CD8-positive, alpha-beta T cell (primary cell): ENCODE measurements at regions of chr1 and their contacts with region 1.

Region 1: GRCh38 chr1:167454894-167455785 is 63.2 kb downstream of the CD247 start:
- DNase-seq: peak; percentile 65 to 93 (median 83)
- ATAC-seq: peak; percentile 63
- H3K4me3 ChIP-seq: peak overlapping the region; percentile 56 to 89
- H3K4me3 Mint-ChIP-seq: peak overlapping the region; percentile 87
- H3K27ac ChIP-seq: peak overlapping the region; percentile 84 to 91
- H3K27ac Mint-ChIP-seq: peak overlapping the region; percentile 96
- H3K4me1 ChIP-seq: peaks cover 68% of the 10 kb centered on the region
- H3K4me1 Mint-ChIP-seq: peaks cover 74% of the 10 kb centered on the region
- H3K27me3 ChIP-seq: no peaks in the 10 kb centered on the region
- H3K27me3 Mint-ChIP-seq: no peaks in the 10 kb centered on the region
- CTCF ChIP-seq: no peak

Region 2: DNA sequence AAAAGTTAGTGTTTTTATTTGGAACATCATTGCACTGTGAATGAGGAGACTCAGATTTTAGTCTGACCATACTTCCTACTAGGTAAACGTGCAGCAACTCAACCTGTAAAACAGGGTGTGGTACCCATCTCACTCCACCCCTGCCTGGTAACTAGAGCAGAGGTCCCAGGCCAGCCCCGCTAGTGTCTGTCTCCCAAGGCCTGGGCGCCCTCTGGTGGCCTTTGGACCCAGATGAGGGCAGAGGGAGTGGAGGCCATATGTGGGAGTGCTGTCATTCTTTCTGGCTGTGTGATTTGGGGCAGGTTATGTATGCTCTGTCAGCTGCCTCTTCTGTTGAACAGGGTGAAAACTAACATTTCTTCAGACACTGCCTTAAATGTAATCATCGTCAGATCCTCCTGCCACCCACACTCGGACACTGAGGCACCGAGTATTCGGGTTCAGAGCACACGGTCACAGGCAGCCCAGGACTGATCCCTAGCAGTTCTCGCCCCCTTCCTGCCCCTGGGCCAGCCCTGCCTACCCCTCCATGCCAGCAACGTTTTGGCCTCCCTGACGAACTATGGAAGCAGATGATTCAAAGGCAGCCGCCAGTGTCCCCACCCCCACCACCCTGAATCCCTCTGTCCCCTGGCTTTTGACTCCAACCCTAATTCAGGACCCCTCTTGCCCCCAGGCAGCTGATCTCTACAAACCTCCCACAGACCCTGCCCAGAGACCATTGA is 12.9 kb before region 1 on chr1:
- CTCF ChIA-PET with region 1: interaction called, 13 read pairs
- POLR2A ChIA-PET with region 1: interaction called, 19 read pairs
- intact Hi-C with region 1: no loop called
- DNase-seq: peak; percentile 78 to 91 (median 89)
- ATAC-seq: peak; percentile 80
- H3K4me3 ChIP-seq: no peak overlapping the region
- H3K4me3 Mint-ChIP-seq: no peak overlapping the region
- H3K27ac ChIP-seq: peak overlapping the region in 1 of 2 experiments; percentile 71
- H3K27ac Mint-ChIP-seq: peak overlapping the region; percentile 85
- H3K4me1 ChIP-seq: peaks cover 81% of the 10 kb centered on the region
- H3K4me1 Mint-ChIP-seq: peaks cover 91% of the 10 kb centered on the region
- H3K27me3 ChIP-seq: no peaks in the 10 kb centered on the region
- H3K27me3 Mint-ChIP-seq: no peaks in the 10 kb centered on the region
- CTCF ChIP-seq: peak; percentile 75

Region 3: GRCh38 chr1:167474191-167474716 is 19.1 kb after region 1 on chr1:
- CTCF ChIA-PET with region 1: interaction called, 11 read pairs
- POLR2A ChIA-PET with region 1: interaction called, 3 read pairs
- intact Hi-C with region 1: loop called in 1 of 2 experiments (anchors 2 kb)
- DNase-seq: peak in 6 of 9 experiments; percentile 43 to 76 (median 60)
- ATAC-seq: peak; percentile 82
- H3K4me3 ChIP-seq: peak overlapping the region; percentile 5 to 15
- H3K4me3 Mint-ChIP-seq: peak overlapping the region; percentile 78
- H3K27ac ChIP-seq: peak overlapping the region in 1 of 2 experiments; percentile 76
- H3K27ac Mint-ChIP-seq: peak overlapping the region; percentile 91
- H3K4me1 ChIP-seq: peaks cover 72% of the 10 kb centered on the region
- H3K4me1 Mint-ChIP-seq: peaks cover 91% of the 10 kb centered on the region
- H3K27me3 ChIP-seq: no peaks in the 10 kb centered on the region
- H3K27me3 Mint-ChIP-seq: no peaks in the 10 kb centered on the region
- CTCF ChIP-seq: no peak

Region 4: DNA sequence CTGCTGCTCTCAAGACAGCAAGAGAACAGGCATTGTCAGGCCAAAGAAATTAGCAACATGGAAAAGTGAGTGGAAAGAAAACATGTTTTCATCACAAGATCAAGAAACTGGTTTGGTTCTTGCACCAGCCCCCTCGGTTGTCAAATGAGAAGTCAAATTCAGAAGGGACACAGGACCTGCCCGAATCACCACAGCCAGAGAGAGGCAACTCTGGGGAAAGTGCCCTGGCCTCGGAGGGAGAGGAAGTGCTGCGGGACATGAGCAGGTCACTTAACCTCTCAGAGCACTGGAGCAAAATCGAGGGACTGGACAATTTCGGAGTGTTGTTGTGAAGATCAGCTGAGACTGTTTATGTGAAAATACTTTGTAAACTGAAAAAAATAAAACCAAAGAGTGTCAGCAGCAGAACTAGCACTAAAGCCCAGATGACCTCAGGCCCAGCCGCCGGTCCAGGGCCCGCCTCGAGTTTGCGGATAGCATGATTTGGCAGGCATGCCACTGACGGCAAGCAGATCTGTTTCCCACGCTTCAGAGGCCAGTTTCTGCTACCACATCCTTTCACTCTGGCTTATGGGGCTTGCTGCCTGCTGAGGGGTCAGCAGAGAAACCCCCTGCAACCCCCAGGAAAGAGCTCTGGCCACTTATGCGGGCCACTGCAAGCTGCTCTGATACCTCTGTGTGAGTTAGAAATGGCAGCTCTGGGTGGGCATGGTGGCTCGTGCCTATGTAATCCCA is 31.1 kb after region 1 on chr1:
- CTCF ChIA-PET with region 1: interaction called, 11 read pairs
- POLR2A ChIA-PET with region 1: interaction called, 17 read pairs
- intact Hi-C with region 1: loop called (anchors 2 kb)
- DNase-seq: peak in 4 of 9 experiments; percentile 23 to 71 (median 52)
- ATAC-seq: no peak
- H3K4me3 ChIP-seq: peak overlapping the region in 1 of 2 experiments; percentile 13
- H3K4me3 Mint-ChIP-seq: peak overlapping the region; percentile 78
- H3K27ac ChIP-seq: peak overlapping the region; percentile 36 to 77
- H3K27ac Mint-ChIP-seq: peak overlapping the region; percentile 94
- H3K4me1 ChIP-seq: peaks cover 96% of the 10 kb centered on the region
- H3K4me1 Mint-ChIP-seq: peaks cover 93% of the 10 kb centered on the region
- H3K27me3 ChIP-seq: no peaks in the 10 kb centered on the region
- H3K27me3 Mint-ChIP-seq: no peaks in the 10 kb centered on the region
- CTCF ChIP-seq: no peak

Region 5: GRCh38 chr1:167542109-167543032 is 87.2 kb after region 1 on chr1:
- CTCF ChIA-PET with region 1: interaction called, 11 read pairs
- POLR2A ChIA-PET with region 1: no interaction called
- intact Hi-C with region 1: no loop called
- DNase-seq: no peak
- ATAC-seq: no peak
- H3K4me3 ChIP-seq: no peak overlapping the region
- H3K4me3 Mint-ChIP-seq: no peak overlapping the region
- H3K27ac ChIP-seq: no peak overlapping the region
- H3K27ac Mint-ChIP-seq: no peak overlapping the region
- H3K4me1 ChIP-seq: no peaks in the 10 kb centered on the region
- H3K4me1 Mint-ChIP-seq: peaks cover 10% of the 10 kb centered on the region
- H3K27me3 ChIP-seq: no peaks in the 10 kb centered on the region
- H3K27me3 Mint-ChIP-seq: no peaks in the 10 kb centered on the region
- CTCF ChIP-seq: no peak